Motor neuron (in vitro differentiated cells): ENCODE measurements at regions of chr3 and their contacts with region 1.

Region 1: DNA sequence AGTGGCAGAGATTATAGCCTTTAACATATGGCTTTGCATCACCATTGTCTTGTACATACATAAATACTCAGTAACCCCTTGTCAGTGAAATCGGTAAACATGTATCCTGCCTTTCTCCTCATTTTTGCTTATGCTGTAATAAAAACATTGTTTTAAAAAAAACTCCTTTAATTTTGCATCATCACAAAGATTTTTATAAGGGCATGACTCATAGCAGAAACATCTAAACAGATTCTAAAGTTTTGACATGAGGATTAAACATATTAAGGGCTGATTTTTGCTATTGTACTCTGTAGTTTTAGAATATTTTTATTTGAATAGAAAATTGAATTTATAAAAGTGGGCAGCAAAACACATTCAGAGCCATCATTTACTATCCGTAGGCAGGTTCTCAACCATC is 275.9 kb downstream of the ZIC4 start:
- ATAC-seq: no peak
- H3K4me3 ChIP-seq: no peak overlapping the region
- H3K27ac ChIP-seq: no peak overlapping the region
- H3K4me1 ChIP-seq: no peaks in the 10 kb centered on the region

Region 2: GRCh38 chr3:147246906-147247305 is 116.4 kb after region 1 on chr3:
- in situ Hi-C with region 1: no loop called
- ATAC-seq: no peak
- H3K4me3 ChIP-seq: no peak overlapping the region
- H3K27ac ChIP-seq: no peak overlapping the region
- H3K4me1 ChIP-seq: no peaks in the 10 kb centered on the region

Region 3: DNA sequence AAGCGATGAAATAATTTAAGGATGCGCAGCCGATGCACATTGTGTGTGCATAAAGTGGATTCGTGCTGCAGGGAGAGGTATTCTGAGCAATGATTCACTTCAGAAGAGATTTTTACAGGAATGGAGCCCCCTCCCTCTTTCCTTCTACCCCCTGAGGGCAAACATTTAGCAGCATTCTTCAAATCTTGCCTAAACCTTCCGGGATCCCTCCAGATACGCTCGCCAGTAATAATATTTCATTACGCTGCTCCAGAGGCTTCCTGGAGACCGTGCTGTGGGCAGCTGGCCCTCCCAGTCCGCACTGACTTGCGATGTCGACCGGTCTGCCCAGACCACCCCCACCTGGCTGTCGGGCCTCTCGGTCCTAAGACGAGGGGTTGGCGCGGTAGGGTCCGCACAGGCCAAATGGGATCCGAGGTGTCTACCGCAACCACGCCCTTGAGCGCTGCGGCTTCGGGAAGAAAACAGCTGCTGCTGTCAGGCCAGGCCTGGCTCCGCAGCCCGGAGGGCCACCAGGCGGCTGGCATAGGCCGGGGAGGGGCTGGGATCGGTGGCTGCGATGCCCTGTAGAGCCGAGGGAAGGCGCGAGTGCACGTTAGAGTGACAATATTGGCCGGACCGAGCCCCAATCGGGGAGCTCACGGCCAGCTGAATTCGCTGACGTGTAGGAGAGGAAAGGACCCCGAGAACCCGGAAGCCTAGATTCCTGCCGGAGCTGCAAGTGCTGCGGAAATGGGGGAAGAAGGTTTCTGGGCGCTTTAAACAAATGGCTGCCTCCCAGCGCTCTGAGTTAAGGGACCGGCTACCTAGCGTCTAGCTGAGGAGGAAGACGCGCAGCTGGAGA is 261.5 kb after region 1 on chr3:
- in situ Hi-C with region 1: loop called in 1 of 9 experiments (anchors 25 kb)
- ATAC-seq: peak; percentile 75 to 89 (median 82)
- H3K4me3 ChIP-seq: peak overlapping the region; percentile 16 to 40 (median 34)
- H3K27ac ChIP-seq: no peak overlapping the region
- H3K4me1 ChIP-seq: peaks cover 3 to 4% of the 10 kb centered on the region in 2 donors